MCF 10A (cell line): ENCODE measurements at regions of chr2 and their contacts with region 1.

Region 1: DNA sequence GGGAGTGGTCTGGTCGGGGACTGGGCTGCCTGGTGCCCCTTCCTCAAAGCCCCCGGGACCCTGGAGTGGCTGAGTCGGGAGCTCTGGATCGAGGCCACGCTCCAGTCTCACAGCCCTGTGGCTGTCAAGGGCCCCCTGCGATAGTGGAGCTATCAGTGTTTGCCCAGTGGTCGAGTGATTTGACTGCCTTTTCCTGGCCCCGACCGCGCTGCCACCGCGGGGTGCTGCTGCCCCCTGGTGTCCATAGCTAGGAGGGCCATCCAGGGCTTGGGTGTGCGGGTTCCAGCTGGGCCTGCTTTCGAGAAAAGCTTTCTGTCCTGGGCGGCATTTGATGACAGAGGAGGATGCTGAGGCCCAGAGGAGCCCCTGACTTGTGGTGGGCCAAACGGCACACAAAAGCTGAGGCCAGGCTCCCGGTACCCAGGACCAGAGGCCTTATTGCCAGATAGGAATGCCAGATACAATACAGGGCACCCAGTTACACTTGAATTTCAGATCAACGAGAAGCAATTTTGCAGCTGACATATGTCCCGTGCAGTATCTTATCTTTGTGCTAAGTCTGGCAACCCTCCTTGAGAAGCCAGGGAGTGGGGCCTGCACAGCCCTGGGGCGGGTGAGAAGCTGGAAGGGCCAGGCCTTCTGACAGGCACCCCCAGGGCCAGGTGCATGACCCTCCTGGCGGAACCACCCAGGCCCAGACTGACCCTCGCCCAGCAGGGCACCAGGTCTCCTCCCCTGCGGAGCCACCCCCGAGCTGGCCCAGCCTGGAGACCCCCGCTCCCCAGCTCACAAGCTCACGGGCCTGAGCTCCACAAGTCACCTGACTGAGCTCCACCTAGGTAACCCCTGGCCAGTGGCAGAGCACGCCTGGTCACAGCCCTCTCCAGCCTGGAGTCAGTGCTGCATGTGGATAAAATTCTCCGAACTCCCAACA is 13.0 kb downstream of the ODC1 start:
- DNase-seq: peak; percentile 81
- H3K4me3 Mint-ChIP-seq: no peak overlapping the region
- H3K27ac Mint-ChIP-seq: peak overlapping the region; percentile 29
- H3K4me1 Mint-ChIP-seq: no peaks in the 10 kb centered on the region
- H3K27me3 Mint-ChIP-seq: no peaks in the 10 kb centered on the region
- CTCF ChIP-seq: peak; percentile 96

Region 2: GRCh38 chr2:10072656-10073480 is 362.3 kb before region 1 on chr2:
- CTCF ChIA-PET with region 1: interaction called, 141 read pairs
- POLR2A ChIA-PET with region 1: interaction called, 8 read pairs
- intact Hi-C with region 1: loop called (anchors 1 kb)
- DNase-seq: peak; percentile 87
- H3K4me3 Mint-ChIP-seq: no peak overlapping the region
- H3K27ac Mint-ChIP-seq: no peak overlapping the region
- H3K4me1 Mint-ChIP-seq: peaks cover 8% of the 10 kb centered on the region
- H3K27me3 Mint-ChIP-seq: peaks cover 46% of the 10 kb centered on the region
- CTCF ChIP-seq: peak; percentile 67

Region 3: GRCh38 chr2:10122386-10123280 is 312.5 kb before region 1 on chr2 and contains the start of gene RRM2:
- CTCF ChIA-PET with region 1: interaction called, 90 read pairs
- POLR2A ChIA-PET with region 1: interaction called, 22 read pairs
- intact Hi-C with region 1: loop called (anchors 1 kb)
- DNase-seq: peak; percentile 96
- H3K4me3 Mint-ChIP-seq: peak within 1 kb of the TSS; percentile 97
- H3K27ac Mint-ChIP-seq: peak within 1 kb of the TSS; percentile 84
- H3K4me1 Mint-ChIP-seq: peaks cover 19% of the 10 kb centered on the region
- H3K27me3 Mint-ChIP-seq: no peaks in the 10 kb centered on the region
- CTCF ChIP-seq: no peak
- total RNA-seq, gene RRM2: 16.5 and 41.8 TPM in 2 replicates

Region 4: GRCh38 chr2:10269711-10270610 is 165.2 kb before region 1 on chr2:
- CTCF ChIA-PET with region 1: no interaction called
- POLR2A ChIA-PET with region 1: no interaction called
- intact Hi-C with region 1: loop called (anchors 1 kb)
- DNase-seq: no peak
- H3K4me3 Mint-ChIP-seq: no peak overlapping the region
- H3K27ac Mint-ChIP-seq: peak overlapping the region; percentile 54
- H3K4me1 Mint-ChIP-seq: peaks cover 19% of the 10 kb centered on the region
- H3K27me3 Mint-ChIP-seq: no peaks in the 10 kb centered on the region
- CTCF ChIP-seq: no peak

Region 5: DNA sequence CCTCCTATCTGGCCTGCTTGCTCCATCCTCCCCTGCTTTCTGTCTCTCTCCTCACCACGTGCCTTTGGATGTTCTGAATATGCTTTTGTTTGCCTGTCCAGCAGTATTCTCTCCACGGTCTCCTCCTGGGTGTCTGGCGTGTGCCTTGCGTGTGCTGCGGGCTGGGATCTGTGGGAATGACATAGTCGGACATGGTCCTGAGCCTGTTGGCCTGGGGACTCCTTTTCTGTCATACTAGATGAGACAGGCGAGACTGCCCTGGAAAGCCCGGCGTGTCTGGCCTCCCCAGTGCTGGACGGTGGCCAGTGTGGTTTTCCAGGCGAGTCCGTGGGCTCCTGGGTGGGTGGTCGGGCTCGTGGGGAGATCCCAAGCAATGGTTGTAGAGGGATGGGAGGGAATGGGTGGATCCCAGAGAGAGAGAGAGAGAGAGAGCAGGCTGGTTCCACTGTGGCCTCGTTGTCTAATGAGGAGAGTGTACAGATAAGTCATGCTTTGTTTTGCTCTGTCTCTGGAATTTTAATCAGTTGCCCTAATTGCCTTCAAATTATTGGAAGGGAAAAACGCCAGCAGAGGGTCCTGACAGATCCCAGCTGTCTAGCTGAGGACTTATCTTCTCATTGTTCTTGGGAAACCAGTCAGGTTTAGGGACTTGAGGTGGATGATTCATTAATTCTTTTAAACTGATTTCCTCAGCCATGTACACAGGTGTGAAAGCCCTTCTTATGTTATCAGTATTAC is 74.1 kb before region 1 on chr2:
- CTCF ChIA-PET with region 1: no interaction called
- POLR2A ChIA-PET with region 1: no interaction called
- intact Hi-C with region 1: no loop called
- DNase-seq: no peak
- H3K4me3 Mint-ChIP-seq: no peak overlapping the region
- H3K27ac Mint-ChIP-seq: peak overlapping the region; percentile 4
- H3K4me1 Mint-ChIP-seq: peaks cover 10% of the 10 kb centered on the region
- H3K27me3 Mint-ChIP-seq: no peaks in the 10 kb centered on the region
- CTCF ChIP-seq: no peak

Region 6: DNA sequence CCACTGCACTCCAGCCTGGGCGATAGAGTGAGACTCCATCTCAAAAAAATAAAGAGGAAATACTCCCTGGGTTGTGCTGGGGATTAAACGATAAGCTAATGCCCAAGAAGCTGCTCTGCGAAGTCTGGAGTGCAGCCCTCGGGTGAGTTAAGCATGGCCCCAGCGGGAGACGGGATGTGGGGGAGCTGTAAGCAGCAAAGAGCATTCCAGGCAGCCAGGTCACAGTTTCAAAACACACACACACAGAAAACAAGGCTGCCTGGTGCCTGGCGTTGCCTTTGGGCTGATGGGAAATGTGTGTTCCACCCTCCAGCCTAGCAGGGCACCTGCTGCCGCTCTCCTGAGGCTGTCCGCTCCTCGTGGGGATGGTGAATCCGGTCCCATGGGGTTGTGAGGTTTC is 11.1 kb before region 1 on chr2:
- CTCF ChIA-PET with region 1: interaction called, 19 read pairs
- POLR2A ChIA-PET with region 1: no interaction called
- intact Hi-C with region 1: no loop called
- DNase-seq: no peak
- H3K4me3 Mint-ChIP-seq: no peak overlapping the region
- H3K27ac Mint-ChIP-seq: no peak overlapping the region
- H3K4me1 Mint-ChIP-seq: no peaks in the 10 kb centered on the region
- H3K27me3 Mint-ChIP-seq: no peaks in the 10 kb centered on the region
- CTCF ChIP-seq: no peak